Activated CD4-positive, alpha-beta T cell treated with anti-CD3 and anti-CD28 coated beads, Interleukin-2, amount 10 ng/mL, durations not matched to agents 7 days and 5 days (primary cell): ENCODE measurements at regions of chr3 and their contacts with region 1.

Region 1: DNA sequence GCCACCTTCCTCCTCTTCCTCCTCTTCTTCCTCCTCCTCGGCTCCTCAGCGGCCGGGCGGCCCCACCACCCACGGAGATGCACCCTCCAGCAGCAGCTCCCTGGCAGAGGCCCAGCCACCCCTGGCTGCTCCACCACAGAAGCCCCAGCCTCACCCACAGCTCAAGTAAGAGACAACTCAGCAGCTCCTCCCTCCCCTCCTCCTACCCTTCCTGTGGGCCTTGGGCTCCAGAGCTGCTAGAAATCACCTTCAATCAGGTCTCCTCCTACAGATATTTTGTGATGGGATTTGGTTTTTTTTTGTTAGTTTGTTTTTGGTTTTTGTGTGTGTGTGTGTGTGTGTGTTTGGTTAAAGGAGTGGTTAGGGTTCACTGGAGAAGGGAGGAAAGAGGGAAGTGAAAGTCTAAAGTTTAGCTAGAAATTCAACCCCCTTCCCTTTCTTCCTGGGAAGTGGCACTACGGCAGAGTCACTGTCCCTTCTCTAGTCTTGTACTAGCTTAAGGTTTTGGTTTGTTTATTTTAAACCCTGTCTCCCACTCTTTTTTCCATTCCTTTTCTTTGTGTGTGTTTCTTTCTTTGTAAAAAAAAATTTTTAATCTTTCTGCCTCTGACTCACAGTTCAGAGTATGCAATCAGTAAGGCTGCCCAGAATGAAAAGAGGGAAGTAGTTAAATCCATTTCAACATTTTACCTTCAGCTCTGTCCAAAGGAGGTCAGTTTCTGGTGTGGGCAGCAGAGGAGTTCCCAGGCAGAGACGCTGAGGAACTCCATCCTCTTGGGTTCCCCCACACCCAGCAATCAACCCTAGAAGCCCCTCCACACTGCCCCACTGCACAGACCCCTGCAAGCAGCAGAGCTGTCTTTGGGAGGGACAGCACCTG is 29.0 kb upstream of the TIMP4 start:
- DNase-seq: peak; percentile 50
- H3K4me3 Mint-ChIP-seq: no peak overlapping the region
- H3K27ac Mint-ChIP-seq: peak overlapping the region; percentile 61
- H3K4me1 Mint-ChIP-seq: peaks cover 15% of the 10 kb centered on the region
- H3K27me3 Mint-ChIP-seq: no peaks in the 10 kb centered on the region

Region 2: DNA sequence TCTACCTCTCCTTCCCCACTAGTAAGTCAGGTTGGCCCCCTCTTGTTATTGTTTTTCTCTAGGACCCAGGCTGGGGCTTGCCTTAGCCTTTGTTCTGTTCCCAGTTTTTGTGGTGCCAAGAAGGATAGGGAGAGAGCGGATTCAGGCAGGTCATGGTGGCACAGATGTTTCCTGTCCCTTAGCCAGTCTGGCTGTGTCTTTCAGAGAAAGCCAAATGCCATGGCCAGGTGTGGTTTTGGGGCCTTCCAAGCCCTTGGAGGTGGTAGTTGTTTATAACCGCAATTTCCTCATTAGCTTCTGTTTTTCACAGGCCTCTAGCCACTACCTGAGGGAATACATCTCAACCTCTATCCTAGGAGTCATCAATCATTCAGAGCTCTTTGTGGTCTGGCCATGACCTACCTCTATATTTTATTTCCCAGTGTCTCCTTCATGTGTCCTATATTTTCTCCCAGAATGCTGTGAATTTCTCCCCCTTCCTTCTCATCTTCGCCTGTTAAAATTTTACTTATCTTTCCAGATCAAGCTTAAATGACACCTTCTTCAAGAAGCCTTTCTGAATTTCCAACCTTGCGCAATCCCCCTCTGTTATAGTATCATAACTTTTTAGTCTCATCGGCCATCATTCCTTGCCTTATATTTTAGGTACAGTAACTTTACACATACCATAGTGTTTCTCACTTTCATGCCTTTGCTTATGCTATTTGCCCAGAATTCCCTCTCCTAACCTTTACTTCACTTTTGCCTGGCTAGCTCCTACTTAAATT is 67.1 kb before region 1 on chr3:
- CTCF ChIA-PET with region 1: no interaction called
- POLR2A ChIA-PET with region 1: interaction called, 11 read pairs
- DNase-seq: no peak
- H3K4me3 Mint-ChIP-seq: no peak overlapping the region
- H3K27ac Mint-ChIP-seq: no peak overlapping the region
- H3K4me1 Mint-ChIP-seq: peaks cover 4% of the 10 kb centered on the region
- H3K27me3 Mint-ChIP-seq: peaks cover 19% of the 10 kb centered on the region

Region 3: GRCh38 chr3:12175844-12176453 is 11.7 kb before region 1 on chr3:
- CTCF ChIA-PET with region 1: interaction called, 20 read pairs
- POLR2A ChIA-PET with region 1: no interaction called
- DNase-seq: no peak
- H3K4me3 Mint-ChIP-seq: no peak overlapping the region
- H3K27ac Mint-ChIP-seq: no peak overlapping the region
- H3K4me1 Mint-ChIP-seq: peaks cover 7% of the 10 kb centered on the region
- H3K27me3 Mint-ChIP-seq: no peaks in the 10 kb centered on the region

Region 4: DNA sequence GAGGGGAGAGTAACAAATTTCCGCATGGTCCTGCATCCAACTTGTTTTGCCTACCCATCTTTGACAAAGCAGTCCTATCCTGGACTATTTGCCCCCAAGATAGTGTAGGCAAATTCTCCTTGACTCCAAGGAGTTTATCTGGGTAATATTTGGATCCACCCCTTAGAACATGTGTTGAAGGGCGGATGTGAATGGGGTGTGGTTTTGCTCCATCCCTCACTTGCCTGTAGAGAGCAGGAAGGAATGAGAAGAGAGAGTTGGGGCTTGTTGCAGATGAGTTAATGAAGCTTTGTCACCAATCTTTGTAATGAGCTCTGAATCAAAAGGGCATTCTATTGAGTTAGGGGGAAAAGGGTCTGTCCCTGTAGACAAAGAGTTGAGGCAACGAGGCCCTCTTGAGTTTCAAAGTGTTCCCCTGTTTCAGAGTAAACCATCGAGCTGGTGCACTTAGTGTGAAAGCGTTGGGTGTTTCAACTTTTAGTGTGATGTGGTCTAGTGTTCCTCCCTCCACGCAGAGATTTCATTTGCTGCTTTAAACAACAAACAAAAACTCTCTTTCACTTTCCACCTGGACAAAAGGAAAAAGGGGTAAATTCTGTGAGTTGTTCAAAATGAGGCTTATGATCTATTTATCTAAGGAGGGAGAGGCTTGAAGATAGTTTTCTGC is 58.9 kb after region 1 on chr3:
- CTCF ChIA-PET with region 1: no interaction called
- POLR2A ChIA-PET with region 1: no interaction called
- DNase-seq: peak; percentile 38
- H3K4me3 Mint-ChIP-seq: peak overlapping the region; percentile 29
- H3K27ac Mint-ChIP-seq: peak overlapping the region; percentile 91
- H3K4me1 Mint-ChIP-seq: peaks cover 16% of the 10 kb centered on the region
- H3K27me3 Mint-ChIP-seq: peaks cover 21% of the 10 kb centered on the region